Mammary epithelial cell (primary cell): ENCODE measurements at regions of chr17 and their contacts with region 1.

Region 1: DNA sequence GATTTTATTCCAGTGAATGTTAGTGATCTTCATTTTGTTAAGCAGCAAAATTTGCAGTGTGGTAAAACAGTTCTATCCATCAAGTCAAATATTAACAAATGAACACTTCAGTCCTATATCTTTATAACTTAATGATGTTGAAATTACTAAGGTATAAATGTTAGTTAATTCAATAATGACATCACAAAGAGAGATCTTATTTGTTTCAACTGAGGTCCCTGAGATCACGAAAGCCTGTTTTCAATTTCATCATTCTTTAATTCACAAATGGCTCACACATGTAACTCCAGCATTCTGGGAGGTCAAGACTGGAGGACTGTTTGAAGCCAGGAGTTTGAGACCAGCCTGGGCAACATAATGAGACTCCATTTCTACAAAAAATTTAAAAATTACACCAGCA is 13.9 kb downstream of the SMURF2 start:
- DNase-seq: no peak
- H3K4me3 ChIP-seq: no peak overlapping the region
- H3K27ac ChIP-seq: no peak overlapping the region
- H3K4me1 ChIP-seq: peaks cover 21% of the 10 kb centered on the region
- H3K27me3 ChIP-seq: no peaks in the 10 kb centered on the region
- CTCF ChIP-seq: no peak

Region 2: GRCh38 chr17:64506576-64507477 is 141.4 kb before region 1 on chr17 and contains the start of gene CEP95:
- CTCF ChIA-PET with region 1: no interaction called
- dilution Hi-C with region 1: no loop called
- in situ Hi-C with region 1: no loop called
- intact Hi-C with region 1: loop called (anchors 2 kb)
- DNase-seq: peak; percentile 99
- H3K4me3 ChIP-seq: peak within 1 kb of the TSS; percentile 82 to 100 (median 97)
- H3K27ac ChIP-seq: peak within 1 kb of the TSS; percentile 99
- H3K4me1 ChIP-seq: peaks cover 37% of the 10 kb centered on the region
- H3K27me3 ChIP-seq: no peaks in the 10 kb centered on the region
- CTCF ChIP-seq: no peak
- total RNA-seq, gene CEP95: 18.7 to 36.5 TPM

Region 3: DNA sequence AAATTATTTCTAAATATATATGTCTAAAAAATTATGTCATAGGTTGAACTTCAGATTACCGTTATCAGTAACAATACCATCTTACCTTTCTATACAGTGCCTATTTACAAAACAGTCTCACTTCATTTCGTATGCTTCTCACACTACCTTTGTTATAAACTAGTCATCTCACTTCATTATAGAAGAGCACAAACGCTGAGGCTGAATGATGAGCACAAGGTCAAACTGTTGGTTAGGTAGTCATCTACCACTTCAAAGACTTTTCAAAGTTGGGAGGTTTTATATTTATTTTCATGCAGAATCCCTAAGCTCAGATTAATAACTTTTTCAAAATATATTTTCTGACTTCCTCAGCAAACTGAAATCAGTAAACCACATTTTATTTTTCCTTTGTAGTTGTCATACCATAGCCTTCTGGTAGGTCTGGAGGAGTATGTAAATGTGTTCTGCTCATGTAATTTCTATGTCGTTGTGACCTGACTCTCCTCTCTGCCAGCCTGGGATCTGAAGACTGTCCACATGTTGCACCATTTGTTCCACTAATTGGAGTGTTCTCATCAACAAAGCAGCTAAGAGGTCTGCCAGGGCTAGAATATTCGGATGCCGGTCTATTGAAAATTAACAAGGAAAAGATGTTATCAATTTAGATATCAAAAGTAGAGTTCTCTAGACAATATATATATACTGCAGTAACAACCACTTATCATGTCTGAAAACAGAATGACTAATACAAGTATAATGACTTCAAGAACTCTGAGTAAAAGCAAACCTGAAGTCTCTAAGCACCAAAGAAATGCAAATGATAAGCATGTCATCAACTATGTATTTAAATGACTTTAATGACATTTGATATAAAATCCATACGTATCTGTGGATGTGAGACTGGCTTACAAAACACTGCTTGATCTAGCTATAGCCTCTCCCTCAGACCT is 67.6 kb before region 1 on chr17:
- CTCF ChIA-PET with region 1: interaction called, 5 read pairs
- dilution Hi-C with region 1: no loop called
- in situ Hi-C with region 1: no loop called
- intact Hi-C with region 1: loop called (anchors 5 kb)
- DNase-seq: no peak
- H3K4me3 ChIP-seq: no peak overlapping the region
- H3K27ac ChIP-seq: no peak overlapping the region
- H3K4me1 ChIP-seq: no peaks in the 10 kb centered on the region
- H3K27me3 ChIP-seq: no peaks in the 10 kb centered on the region
- CTCF ChIP-seq: no peak

Region 4: DNA sequence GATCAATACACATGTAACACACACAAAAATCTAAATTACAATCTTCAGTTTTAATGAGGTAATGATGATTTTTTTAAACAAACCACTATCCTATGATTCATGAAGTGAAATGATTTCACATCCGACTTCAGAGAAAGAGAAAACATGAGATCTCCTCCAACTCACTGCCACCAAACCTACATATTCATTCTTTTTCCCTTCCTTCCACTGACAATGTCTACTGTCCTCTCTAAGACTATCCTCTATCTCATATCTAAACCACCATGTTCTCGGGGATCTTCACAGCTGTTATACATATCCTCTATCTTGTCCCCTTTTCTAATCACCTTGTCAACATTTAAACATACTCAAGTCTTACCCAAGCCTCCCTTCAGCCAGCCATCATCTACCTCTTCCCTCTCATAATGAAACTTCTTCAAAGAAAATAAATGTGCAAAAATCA is 39.7 kb before region 1 on chr17:
- CTCF ChIA-PET with region 1: no interaction called
- dilution Hi-C with region 1: no loop called
- in situ Hi-C with region 1: no loop called
- intact Hi-C with region 1: loop called (anchors 5 kb)
- DNase-seq: peak; percentile 53
- H3K4me3 ChIP-seq: no peak overlapping the region
- H3K27ac ChIP-seq: peak overlapping the region; percentile 15
- H3K4me1 ChIP-seq: peaks cover 7% of the 10 kb centered on the region
- H3K27me3 ChIP-seq: no peaks in the 10 kb centered on the region
- CTCF ChIP-seq: no peak

Region 5: GRCh38 chr17:64736804-64737492 is 88.7 kb after region 1 on chr17:
- CTCF ChIA-PET with region 1: no interaction called
- dilution Hi-C with region 1: no loop called
- in situ Hi-C with region 1: no loop called
- intact Hi-C with region 1: loop called (anchors 2 kb)
- DNase-seq: peak; percentile 46
- H3K4me3 ChIP-seq: no peak overlapping the region
- H3K27ac ChIP-seq: no peak overlapping the region
- H3K4me1 ChIP-seq: peaks cover 2% of the 10 kb centered on the region
- H3K27me3 ChIP-seq: no peaks in the 10 kb centered on the region
- CTCF ChIP-seq: peak; percentile 46 to 60